Psoas muscle (tissue), 8 donors: ENCODE measurements at regions of chr17 and their contacts with region 1.

Region 1: GRCh38 chr17:65008882-65009281 is 47.7 kb downstream of the GNA13 start:
- DNase-seq: no peak
- ATAC-seq: no peak
- H3K4me3 ChIP-seq: no peak overlapping the region
- H3K27ac ChIP-seq: no peak overlapping the region
- H3K4me1 ChIP-seq: peaks cover 38% of the 10 kb centered on the region
- H3K27me3 ChIP-seq: no peaks in the 10 kb centered on the region
- CTCF ChIP-seq: no peak

Region 2: GRCh38 chr17:65041518-65041917 is 32.6 kb after region 1 on chr17:
- intact Hi-C with region 1: loop called in 1 of 2 experiments (anchors 5 kb)
- DNase-seq: no peak
- ATAC-seq: peak in 1 of 4 donors; percentile 21
- H3K4me3 ChIP-seq: no peak overlapping the region
- H3K27ac ChIP-seq: no peak overlapping the region
- H3K4me1 ChIP-seq: peaks cover 58% of the 10 kb centered on the region
- H3K27me3 ChIP-seq: no peaks in the 10 kb centered on the region
- CTCF ChIP-seq: no peak